ENCODE measurements at regions of chr17 and their contacts with region 1.

Region 1: DNA sequence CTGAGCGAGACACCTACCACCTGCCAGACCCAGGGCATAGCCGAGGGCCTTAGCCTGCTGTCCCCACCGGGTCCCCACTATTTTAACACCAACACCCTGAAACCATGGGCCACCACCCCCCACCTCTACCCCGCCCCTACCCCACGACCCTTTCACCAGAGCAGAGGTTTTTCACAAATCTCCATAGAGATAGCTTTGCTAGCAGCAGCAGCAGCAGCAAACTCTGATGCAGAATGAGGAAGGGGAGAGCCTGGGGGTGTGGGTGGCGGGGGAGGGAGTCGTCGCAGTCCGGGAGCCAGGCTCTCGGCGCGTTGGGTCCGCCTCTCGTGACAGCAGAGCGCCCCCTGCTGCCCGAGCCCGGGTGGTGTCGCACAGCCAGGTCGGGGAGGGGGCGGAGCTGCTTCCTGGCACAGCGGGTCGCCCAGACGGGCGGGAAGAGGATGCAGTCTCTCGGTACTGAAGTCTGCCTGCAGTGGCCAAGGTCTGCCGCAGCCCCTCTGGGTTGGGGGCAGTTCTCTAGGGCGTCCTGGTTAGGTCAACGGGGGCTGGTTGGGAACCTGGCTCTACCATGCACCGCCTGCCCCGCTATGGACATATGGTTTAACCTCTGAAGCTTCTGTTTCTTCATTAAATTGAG is 38.1 kb upstream of the CCDC182 start:
- DNase-seq: no peak
- H3K4me3 ChIP-seq: no peak overlapping the region
- CTCF ChIP-seq: peak; percentile 81

Region 2: DNA sequence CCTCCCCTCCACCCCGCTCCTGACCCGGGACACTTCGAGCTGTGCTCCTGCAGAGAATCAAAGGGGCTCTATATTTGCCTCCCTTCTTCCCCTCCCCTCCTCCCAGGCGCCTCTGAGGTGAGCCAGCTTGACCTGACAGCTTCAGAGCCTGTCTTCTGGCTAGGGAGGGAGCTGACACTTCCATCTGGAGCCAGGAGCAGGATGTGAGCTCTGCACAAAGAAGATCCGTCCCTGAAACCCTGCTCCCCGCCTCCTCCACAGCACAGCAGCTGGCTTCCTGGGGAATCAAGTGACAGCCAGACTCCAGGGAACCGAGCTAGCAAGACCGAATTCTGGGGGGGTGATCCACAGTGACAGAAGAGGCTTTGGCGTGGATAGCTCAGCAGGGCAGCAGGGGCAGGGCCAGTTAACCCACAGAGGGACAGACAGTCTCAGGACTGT is 75.4 kb before region 1 on chr17:
- CTCF ChIA-PET with region 1: no interaction called
- POLR2A ChIA-PET with region 1: no interaction called
- DNase-seq: no peak
- H3K4me3 ChIP-seq: no peak overlapping the region
- CTCF ChIP-seq: no peak

Region 3: DNA sequence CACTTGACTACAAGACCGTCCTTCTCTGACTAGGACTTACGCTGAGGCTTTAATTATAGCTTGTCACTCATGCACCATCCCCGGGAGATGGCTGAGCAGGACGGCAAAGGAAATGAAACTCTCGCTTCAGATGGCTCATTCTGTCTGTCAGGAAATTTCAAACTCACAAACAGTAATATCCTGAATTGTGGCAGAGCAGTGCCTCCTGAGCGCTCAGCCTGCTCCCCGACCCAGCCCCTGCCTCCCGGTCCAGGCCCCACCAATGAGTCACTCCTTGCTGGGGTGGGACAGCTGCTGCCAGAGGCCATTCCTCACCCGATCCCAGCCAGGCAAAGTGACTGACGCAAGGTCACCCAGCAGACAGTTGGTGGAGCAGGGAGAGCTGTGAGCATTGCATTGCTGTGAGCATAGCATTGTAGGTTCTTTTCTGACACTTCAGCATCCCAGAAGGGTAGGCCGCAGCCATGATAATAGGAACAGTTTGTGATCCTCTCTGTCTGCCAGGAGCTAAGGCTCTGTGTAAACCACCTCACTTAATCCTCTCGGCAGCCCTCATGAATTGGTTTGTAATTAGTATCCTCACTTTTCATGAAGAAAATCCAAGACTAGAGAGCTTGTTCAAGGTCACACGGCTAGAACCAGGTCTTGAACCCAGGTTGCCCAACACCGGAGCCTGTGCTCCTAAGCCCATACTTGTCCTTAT is 59.0 kb before region 1 on chr17:
- CTCF ChIA-PET with region 1: no interaction called
- POLR2A ChIA-PET with region 1: no interaction called
- DNase-seq: no peak
- H3K4me3 ChIP-seq: no peak overlapping the region
- CTCF ChIP-seq: no peak

Region 4: GRCh38 chr17:57747221-57748017 is 35.8 kb before region 1 on chr17:
- CTCF ChIA-PET with region 1: interaction called, 11 read pairs
- POLR2A ChIA-PET with region 1: no interaction called
- DNase-seq: peak; percentile 24
- H3K4me3 ChIP-seq: no peak overlapping the region
- CTCF ChIP-seq: peak; percentile 59

Region 5: DNA sequence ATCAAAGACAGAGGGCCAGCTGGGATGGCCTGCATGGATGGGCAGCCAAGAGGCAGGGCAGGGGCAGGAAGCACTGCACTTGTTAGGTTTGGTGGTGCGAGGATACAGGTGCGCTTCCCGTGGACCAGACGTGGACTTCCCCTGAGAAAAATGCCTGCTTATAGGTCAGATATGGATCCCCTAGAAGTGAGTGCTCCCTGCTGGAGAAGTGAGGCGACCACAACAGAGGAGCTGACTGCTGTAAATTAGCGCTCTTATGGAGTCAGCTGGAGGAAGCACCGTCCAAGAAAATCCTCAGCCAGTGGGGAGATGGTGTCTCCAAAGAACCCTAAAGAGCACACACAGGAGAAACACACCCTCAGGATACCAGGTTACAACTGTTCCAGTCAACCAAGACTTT is 10.4 kb before region 1 on chr17:
- CTCF ChIA-PET with region 1: interaction called, 16 read pairs
- POLR2A ChIA-PET with region 1: no interaction called
- DNase-seq: no peak
- H3K4me3 ChIP-seq: no peak overlapping the region
- CTCF ChIP-seq: no peak

Region 6: DNA sequence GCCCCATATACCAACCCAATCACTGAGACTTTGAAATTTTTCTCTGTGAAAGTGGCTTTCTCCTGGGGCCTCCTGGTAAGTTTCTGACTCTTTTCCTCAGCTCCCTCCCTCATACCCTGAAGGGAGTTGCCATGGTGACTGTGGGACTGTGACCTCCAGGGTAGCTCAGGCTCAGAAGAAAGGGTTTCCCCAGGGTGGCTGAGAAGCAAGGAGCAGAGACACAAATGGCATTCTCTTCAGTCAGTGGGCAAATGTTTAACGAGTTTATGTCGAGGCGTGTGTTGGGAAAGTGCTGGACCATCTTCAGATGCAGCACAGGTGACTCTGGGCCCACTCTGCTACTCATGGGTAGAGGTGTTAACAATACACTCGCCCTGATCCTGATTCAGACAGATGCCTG is 19.8 kb after region 1 on chr17:
- CTCF ChIA-PET with region 1: interaction called, 10 read pairs
- POLR2A ChIA-PET with region 1: no interaction called
- DNase-seq: no peak
- H3K4me3 ChIP-seq: no peak overlapping the region
- CTCF ChIP-seq: no peak